PC-9 (cell line): ENCODE measurements at regions of chr7 and their contacts with region 1.

Region 1: DNA sequence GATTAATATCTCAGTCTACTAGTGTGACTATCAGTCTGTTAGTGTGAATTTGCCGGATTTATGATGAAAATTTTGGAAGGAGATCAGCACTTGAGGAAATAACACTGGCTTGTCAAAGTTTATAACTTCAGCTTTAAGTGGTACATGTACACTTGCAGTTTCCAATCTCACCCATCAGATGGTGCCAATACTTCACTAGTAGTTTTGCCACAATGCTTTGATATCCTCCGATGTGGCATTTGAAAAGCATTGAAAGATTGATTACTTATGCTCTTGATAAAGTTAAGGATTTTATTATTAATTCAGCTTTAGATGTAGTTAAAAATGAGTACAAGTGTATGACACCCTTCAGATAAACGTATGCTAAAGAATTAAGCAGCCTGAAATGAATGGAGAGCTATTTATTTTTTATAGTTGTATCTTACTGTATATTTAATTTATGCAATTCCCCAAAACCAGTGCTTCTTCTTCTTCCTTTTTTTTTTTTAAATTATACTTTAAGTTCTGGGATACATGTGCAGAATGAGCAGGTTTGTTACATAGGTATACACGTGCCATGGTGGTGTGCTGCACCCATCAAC is 98.2 kb downstream of the ANLN start:
- DNase-seq: peak; percentile 21 to 63
- H3K4me3 ChIP-seq: no peak overlapping the region
- H3K27ac ChIP-seq: no peak overlapping the region
- H3K4me1 ChIP-seq: no peaks in the 10 kb centered on the region
- H3K27me3 ChIP-seq: peaks cover 70% of the 10 kb centered on the region
- CTCF ChIP-seq: peak; percentile 83

Region 2: DNA sequence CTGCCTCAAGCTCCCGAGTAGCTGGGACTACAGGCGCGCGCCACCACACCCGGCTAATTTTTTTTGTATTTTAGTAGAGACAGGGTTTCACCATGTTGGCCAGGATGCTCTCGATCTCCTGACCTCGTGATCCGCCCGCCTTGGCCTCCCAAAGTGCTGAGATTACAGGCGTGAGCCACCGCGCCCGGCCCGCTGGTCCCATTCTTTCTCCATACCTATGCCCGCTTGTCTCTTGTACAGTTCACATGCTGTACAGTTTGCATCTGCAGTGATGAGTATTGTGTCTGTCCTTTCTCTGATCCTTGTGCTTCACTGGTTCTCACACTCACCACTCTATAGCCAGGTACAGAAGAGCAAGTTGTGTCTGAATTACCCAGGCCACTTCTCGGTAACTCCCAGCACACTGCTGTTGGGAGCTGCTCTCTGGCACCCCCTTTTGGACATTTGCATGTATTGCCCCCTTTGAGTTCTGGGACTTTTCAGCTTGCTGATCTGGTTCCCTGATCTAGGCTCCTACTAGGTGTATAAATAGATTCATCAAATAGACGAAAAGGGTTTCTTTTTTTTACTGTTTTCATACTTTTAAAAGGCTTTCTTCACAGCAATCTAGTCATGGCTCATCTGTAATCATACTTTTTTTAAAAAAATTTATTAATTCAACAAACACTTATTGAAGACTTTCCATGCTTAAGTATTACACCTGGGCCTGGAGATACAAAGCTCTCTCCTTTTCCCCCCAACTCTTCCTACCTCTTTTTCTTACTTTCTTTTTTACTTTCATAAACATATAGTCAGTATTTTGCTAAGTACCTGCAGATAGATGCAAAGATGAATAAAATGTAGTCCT is 183.0 kb after region 1 on chr7:
- CTCF ChIA-PET with region 1: interaction called, 12 read pairs
- POLR2A ChIA-PET with region 1: no interaction called
- intact Hi-C with region 1: loop called (anchors 1 kb)
- DNase-seq: peak in 1 of 2 experiments; percentile 55
- H3K4me3 ChIP-seq: no peak overlapping the region
- H3K27ac ChIP-seq: no peak overlapping the region
- H3K4me1 ChIP-seq: no peaks in the 10 kb centered on the region
- H3K27me3 ChIP-seq: peaks cover 28% of the 10 kb centered on the region
- CTCF ChIP-seq: peak; percentile 95

Region 3: GRCh38 chr7:36967387-36967786 is 479.5 kb after region 1 on chr7:
- CTCF ChIA-PET with region 1: no interaction called
- POLR2A ChIA-PET with region 1: no interaction called
- intact Hi-C with region 1: loop called (anchors 1 kb)
- DNase-seq: peak; percentile 48 to 55
- H3K4me3 ChIP-seq: no peak overlapping the region
- H3K27ac ChIP-seq: no peak overlapping the region
- H3K4me1 ChIP-seq: no peaks in the 10 kb centered on the region
- H3K27me3 ChIP-seq: peaks cover 17% of the 10 kb centered on the region; the same call in 1 of the 2 replicates
- CTCF ChIP-seq: peak; percentile 96